Sciatic nerve (tissue), 2 donors: ENCODE measurements at regions of chr19 and their contacts with region 1.

Region 1: GRCh38 chr19:34184880-34185491 is 12.7 kb downstream of the LSM14A start:
- DNase-seq: no peak
- ATAC-seq: peak; percentile 74

Region 2: DNA sequence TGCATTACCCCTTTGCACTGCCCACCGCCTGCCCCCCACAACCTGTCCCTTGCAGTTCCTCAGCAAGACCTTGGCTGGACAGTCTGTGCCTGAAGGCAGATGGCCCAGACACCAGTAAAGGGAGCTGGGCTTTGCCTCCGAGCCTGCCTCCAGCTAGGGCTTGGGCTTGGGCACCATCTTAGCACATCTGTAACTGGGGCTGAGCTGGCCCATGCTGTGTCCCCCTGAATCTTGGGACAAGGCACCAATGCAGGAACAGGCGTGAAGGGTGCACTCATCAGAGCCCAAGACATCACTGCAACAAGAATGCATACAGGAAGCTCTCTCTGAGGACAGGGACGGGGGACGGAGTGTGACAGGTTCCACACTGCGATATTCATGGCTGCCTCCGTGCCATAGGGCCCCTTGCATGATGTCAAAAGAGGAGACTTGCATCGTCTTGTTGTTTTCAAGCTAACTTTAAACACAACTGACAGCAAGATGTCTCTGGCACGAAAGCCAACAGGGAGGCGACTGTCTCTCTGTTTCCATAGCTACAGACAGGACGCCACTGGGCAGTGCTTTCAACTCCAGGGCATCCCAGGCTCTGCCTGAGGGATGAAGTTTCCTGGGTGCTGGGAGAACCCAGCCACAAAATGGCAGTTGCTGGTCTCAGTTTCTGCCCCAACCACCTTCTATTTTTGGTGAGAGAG is 571.9 kb before region 1 on chr19:
- intact Hi-C with region 1: no loop called
- DNase-seq: no peak
- ATAC-seq: no peak

Region 3: GRCh38 chr19:33831825-33832224 is 353.2 kb before region 1 on chr19:
- intact Hi-C with region 1: loop called (anchors 5 kb)
- DNase-seq: no peak
- ATAC-seq: no peak